CD4-positive, alpha-beta memory T cell (primary cell): ENCODE measurements at regions of chr2 and their contacts with region 1.

Region 1: DNA sequence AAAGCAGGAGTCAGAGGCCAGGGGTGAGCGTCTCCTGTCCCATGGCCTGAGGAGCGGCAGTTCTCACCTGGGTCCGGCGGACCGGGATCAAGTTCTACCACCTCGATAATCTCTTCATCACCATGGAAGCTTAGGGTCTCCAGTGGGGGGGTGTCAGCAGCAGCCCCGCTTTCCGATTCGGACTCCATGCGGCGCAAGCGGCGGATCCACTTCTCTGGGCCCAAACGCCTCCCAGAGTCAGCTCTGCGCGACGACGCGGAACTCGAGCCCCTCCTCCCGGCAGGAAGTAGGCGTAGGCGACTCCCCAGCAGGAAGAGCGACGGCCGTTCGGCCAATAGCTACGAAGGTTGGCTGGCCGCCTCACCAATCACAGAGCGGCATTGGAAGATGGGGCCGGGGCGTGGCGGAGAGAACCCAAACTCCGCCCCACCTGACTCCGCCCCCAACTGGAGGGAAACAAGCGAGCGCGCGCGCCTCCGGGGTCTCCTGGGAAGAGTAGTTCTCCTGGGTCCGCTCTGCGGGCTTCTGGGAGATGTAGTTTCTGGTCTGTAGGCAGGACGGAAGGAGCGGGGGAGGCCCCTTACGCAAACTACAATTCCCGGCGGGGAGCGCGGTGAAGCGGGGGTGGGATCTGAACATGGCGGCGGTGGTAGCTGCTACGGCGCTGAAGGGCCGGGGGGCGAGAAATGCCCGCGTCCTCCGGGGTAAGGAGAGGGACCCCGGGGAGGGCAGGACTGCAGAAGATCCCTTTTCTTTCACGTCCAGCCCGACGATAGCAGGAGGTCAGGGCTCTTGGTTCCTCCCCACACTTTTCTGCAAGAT is at the starts of genes AAMP and PNKD:
- DNase-seq: peak; percentile 100
- H3K4me3 ChIP-seq: peak within 1 kb of the TSS; percentile 80 to 91
- H3K4me3 Mint-ChIP-seq: peak within 1 kb of the TSS; percentile 87 to 96 (median 94)
- H3K27ac ChIP-seq: peak within 1 kb of the TSS; percentile 84
- H3K27ac Mint-ChIP-seq: peak within 1 kb of the TSS; percentile 92 to 96 (median 93)
- H3K4me1 ChIP-seq: peaks cover 34% of the 10 kb centered on the region
- H3K4me1 Mint-ChIP-seq: peaks cover 34 to 60% (median 48%) of the 10 kb centered on the region in 4 donors
- H3K27me3 ChIP-seq: no peaks in the 10 kb centered on the region
- H3K27me3 Mint-ChIP-seq: no peaks in the 10 kb centered on the region
- total RNA-seq, gene AAMP: 66.2 to 66.3 TPM
- total RNA-seq, gene PNKD: 31.1 to 33.6 TPM

Region 2: GRCh38 chr2:218223046-218223445 is 47.1 kb before region 1 on chr2:
- CTCF ChIA-PET with region 1: interaction called, 13 read pairs
- POLR2A ChIA-PET with region 1: interaction called, 40 read pairs
- intact Hi-C with region 1: no loop called
- DNase-seq: peak in 1 of 5 donors; percentile 63
- H3K4me3 ChIP-seq: peak overlapping the region in 1 of 2 donors; percentile 15
- H3K4me3 Mint-ChIP-seq: peak overlapping the region; percentile 72 to 95 (median 73)
- H3K27ac ChIP-seq: peak overlapping the region; percentile 93
- H3K27ac Mint-ChIP-seq: peak overlapping the region; percentile 77 to 95 (median 91)
- H3K4me1 ChIP-seq: peaks cover 90% of the 10 kb centered on the region
- H3K4me1 Mint-ChIP-seq: peaks cover 65 to 97% (median 81%) of the 10 kb centered on the region in 4 donors
- H3K27me3 ChIP-seq: no peaks in the 10 kb centered on the region
- H3K27me3 Mint-ChIP-seq: no peaks in the 10 kb centered on the region

Region 3: DNA sequence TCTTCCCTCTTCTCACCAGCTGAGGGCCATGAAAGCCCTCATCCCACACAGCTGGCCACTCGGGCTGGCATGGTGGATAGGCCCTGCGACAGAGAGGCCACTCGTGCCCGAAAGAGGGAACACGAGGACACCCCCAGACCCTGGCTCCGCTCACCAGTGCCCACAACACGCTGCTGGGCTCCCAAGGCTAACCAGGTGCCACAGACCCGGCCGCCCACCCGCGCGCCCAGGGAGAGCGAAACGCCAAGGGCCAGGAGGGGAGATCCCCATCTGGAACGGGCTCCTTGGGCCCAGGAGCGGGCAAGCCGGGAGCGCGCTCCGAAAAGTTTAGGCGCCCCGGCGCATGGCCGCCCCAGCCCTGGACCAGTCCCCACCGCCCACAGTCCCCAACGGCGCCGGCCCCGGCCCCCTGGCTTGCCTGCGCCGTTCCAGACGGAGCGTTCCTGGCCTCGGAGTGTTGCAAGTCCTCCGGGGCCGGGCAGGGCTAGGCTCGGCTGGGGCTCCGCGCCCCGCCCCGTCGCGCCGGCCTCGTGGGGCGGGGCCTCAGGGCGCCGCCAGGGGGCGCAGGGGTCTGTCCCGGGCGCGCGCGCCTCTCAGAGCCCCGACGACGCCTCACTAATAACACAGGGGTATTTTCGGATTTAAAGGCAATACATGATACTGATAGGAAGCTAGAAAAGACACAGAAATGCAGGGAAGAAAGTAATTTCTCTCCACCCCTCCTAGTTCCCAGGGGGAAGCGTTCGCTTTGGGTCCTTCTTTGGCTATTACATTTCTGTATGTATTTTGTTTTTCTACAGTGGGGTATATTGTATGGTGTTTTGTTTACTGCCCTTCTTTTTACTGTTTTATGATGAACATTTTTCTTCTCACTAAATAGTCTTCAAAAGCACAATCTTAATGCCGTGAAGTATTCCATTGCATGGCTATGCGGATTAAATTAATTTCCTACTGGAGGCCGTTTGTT is 22.2 kb after region 1 on chr2 and contains the start of gene TMBIM1:
- CTCF ChIA-PET with region 1: interaction called, 446 read pairs
- POLR2A ChIA-PET with region 1: interaction called, 188 read pairs
- intact Hi-C with region 1: loop called (anchors 1 kb)
- DNase-seq: peak; percentile 73 to 86 (median 83)
- H3K4me3 ChIP-seq: peak within 1 kb of the TSS; percentile 74 to 78
- H3K4me3 Mint-ChIP-seq: peak within 1 kb of the TSS; percentile 90 to 97 (median 96)
- H3K27ac ChIP-seq: peak within 1 kb of the TSS; percentile 94
- H3K27ac Mint-ChIP-seq: peak within 1 kb of the TSS; percentile 98 to 100 (median 99)
- H3K4me1 ChIP-seq: peaks cover 56% of the 10 kb centered on the region
- H3K4me1 Mint-ChIP-seq: peaks cover 32 to 75% (median 51%) of the 10 kb centered on the region in 4 donors
- H3K27me3 ChIP-seq: no peaks in the 10 kb centered on the region
- H3K27me3 Mint-ChIP-seq: no peaks in the 10 kb centered on the region
- total RNA-seq, gene TMBIM1: 140 to 144 TPM

Region 4: GRCh38 chr2:218395797-218396687 is 125.9 kb after region 1 on chr2:
- CTCF ChIA-PET with region 1: interaction called, 62 read pairs
- POLR2A ChIA-PET with region 1: interaction called, 72 read pairs
- intact Hi-C with region 1: loop called (anchors 1 kb)
- DNase-seq: peak; percentile 95 to 98 (median 96)
- H3K4me3 ChIP-seq: peak overlapping the region; percentile 97 to 98
- H3K4me3 Mint-ChIP-seq: peak overlapping the region; percentile 88 to 95 (median 93)
- H3K27ac ChIP-seq: peak overlapping the region; percentile 89
- H3K27ac Mint-ChIP-seq: peak overlapping the region; percentile 99 to 100 (median 99)
- H3K4me1 ChIP-seq: peaks cover 49% of the 10 kb centered on the region
- H3K4me1 Mint-ChIP-seq: peaks cover 15 to 51% (median 36%) of the 10 kb centered on the region in 4 donors
- H3K27me3 ChIP-seq: no peaks in the 10 kb centered on the region
- H3K27me3 Mint-ChIP-seq: no peaks in the 10 kb centered on the region

Region 5: DNA sequence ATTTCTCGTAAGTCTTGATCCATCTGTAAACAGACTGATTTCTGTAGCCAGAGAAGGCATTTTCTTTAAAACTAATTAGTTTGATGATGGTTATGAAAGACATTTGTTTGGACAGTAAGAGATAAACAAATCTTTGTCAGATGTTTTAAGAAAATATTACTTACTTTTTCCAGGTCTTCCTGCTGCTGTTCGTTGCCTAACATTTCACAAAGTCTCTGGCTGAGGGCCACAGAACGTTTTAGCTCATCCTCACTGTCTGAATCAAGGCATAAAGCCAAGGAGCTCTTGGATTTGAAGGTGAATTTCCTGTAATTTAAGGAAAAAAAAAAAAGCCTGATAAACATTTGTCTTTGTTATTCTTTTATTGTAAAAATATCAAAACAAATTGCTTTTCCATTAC is 206.6 kb after region 1 on chr2:
- CTCF ChIA-PET with region 1: no interaction called
- POLR2A ChIA-PET with region 1: no interaction called
- intact Hi-C with region 1: no loop called
- DNase-seq: no peak
- H3K4me3 ChIP-seq: no peak overlapping the region
- H3K4me3 Mint-ChIP-seq: no peak overlapping the region
- H3K27ac ChIP-seq: no peak overlapping the region
- H3K27ac Mint-ChIP-seq: no peak overlapping the region
- H3K4me1 ChIP-seq: no peaks in the 10 kb centered on the region
- H3K4me1 Mint-ChIP-seq: peaks cover 0 to 2% (median 0%) of the 10 kb centered on the region in 4 donors
- H3K27me3 ChIP-seq: no peaks in the 10 kb centered on the region
- H3K27me3 Mint-ChIP-seq: no peaks in the 10 kb centered on the region

Region 6: GRCh38 chr2:218648088-218648786 is 378.1 kb after region 1 on chr2:
- CTCF ChIA-PET with region 1: no interaction called
- POLR2A ChIA-PET with region 1: no interaction called
- intact Hi-C with region 1: loop called (anchors 1 kb)
- DNase-seq: peak in 4 of 5 donors; percentile 42 to 52 (median 48)
- H3K4me3 ChIP-seq: no peak overlapping the region
- H3K4me3 Mint-ChIP-seq: no peak overlapping the region
- H3K27ac ChIP-seq: no peak overlapping the region
- H3K27ac Mint-ChIP-seq: peak overlapping the region in 2 of 7 donors; percentile 54 to 67
- H3K4me1 ChIP-seq: peaks cover 6% of the 10 kb centered on the region
- H3K4me1 Mint-ChIP-seq: peaks cover 6 to 13% (median 11%) of the 10 kb centered on the region in 4 donors
- H3K27me3 ChIP-seq: no peaks in the 10 kb centered on the region
- H3K27me3 Mint-ChIP-seq: no peaks in the 10 kb centered on the region

Region 7: GRCh38 chr2:219388127-219388844 is 1118.2 kb after region 1 on chr2:
- CTCF ChIA-PET with region 1: no interaction called
- POLR2A ChIA-PET with region 1: no interaction called
- intact Hi-C with region 1: loop called (anchors 5 kb)
- DNase-seq: peak; percentile 97 to 99 (median 98)
- H3K4me3 ChIP-seq: peak overlapping the region; percentile 30
- H3K4me3 Mint-ChIP-seq: peak overlapping the region; percentile 63 to 96 (median 72)
- H3K27ac ChIP-seq: peak overlapping the region; percentile 77
- H3K27ac Mint-ChIP-seq: peak overlapping the region; percentile 90 to 96 (median 92)
- H3K4me1 ChIP-seq: peaks cover 22% of the 10 kb centered on the region
- H3K4me1 Mint-ChIP-seq: peaks cover 11 to 36% (median 22%) of the 10 kb centered on the region in 4 donors
- H3K27me3 ChIP-seq: no peaks in the 10 kb centered on the region
- H3K27me3 Mint-ChIP-seq: no peaks in the 10 kb centered on the region